ENCODE measurements at regions of chr14 and their contacts with region 1.

Region 1: DNA sequence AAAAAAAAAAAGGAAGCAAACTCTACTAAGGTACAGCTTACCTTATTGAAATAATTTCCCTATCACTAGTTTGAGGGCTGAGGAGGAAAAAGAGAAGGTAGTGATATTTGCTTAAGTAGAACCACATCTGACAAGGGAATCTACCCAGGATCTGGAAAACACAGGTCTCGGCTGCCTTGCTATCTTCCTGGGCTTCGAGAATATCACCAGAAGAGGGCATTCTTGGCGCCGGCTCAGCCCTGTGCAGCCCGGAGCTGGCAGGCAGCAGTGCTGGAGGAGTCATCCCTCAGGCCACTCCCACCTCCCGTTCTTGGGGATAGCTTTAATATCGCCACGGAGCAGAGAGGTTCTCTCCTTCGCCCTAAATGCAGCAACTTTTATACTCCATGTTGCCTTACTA is 1181.2 kb downstream of the VRK1 start:
- DNase-seq: peak; percentile 6
- ATAC-seq: peak; percentile 89
- H3K4me3 ChIP-seq: no peak overlapping the region
- H3K27ac ChIP-seq: no peak overlapping the region
- H3K4me1 ChIP-seq: no peaks in the 10 kb centered on the region
- H3K27me3 ChIP-seq: no peaks in the 10 kb centered on the region
- CTCF ChIP-seq: peak in 1 of 3 experiments; percentile 21; a peak in 1 of 6 replicates
- POLR2A ChIP-seq: no peak
- RAD21 ChIP-seq: peak; percentile 27; the same call in 1 of the 2 replicates

Region 2: GRCh38 chr14:98382662-98383061 is 404.3 kb after region 1 on chr14:
- CTCF ChIA-PET with region 1: no interaction called
- POLR2A ChIA-PET with region 1: no interaction called
- RAD21 ChIA-PET with region 1: no interaction called
- intact Hi-C with region 1: no loop called
- DNase-seq: no peak
- ATAC-seq: no peak
- H3K4me3 ChIP-seq: no peak overlapping the region
- H3K27ac ChIP-seq: no peak overlapping the region
- H3K4me1 ChIP-seq: no peaks in the 10 kb centered on the region
- H3K27me3 ChIP-seq: no peaks in the 10 kb centered on the region
- CTCF ChIP-seq: no peak
- POLR2A ChIP-seq: no peak
- RAD21 ChIP-seq: no peak

Region 3: GRCh38 chr14:99266181-99267178 is 1288.1 kb after region 1 on chr14:
- CTCF ChIA-PET with region 1: no interaction called
- POLR2A ChIA-PET with region 1: no interaction called
- RAD21 ChIA-PET with region 1: no interaction called
- intact Hi-C with region 1: loop called (anchors 1 kb)
- DNase-seq: peak; percentile 45
- ATAC-seq: peak; percentile 96
- H3K4me3 ChIP-seq: no peak overlapping the region; a peak in 1 of 4 replicates
- H3K27ac ChIP-seq: no peak overlapping the region
- H3K4me1 ChIP-seq: peaks cover 4 to 9% of the 10 kb centered on the region in 2 experiments; a peak in 3 of 4 replicates
- H3K27me3 ChIP-seq: peaks cover 2% of the 10 kb centered on the region; the same call in 1 of the 2 replicates
- CTCF ChIP-seq: peak; percentile 73 to 99 (median 97); a peak in 5 of 6 replicates
- POLR2A ChIP-seq: no peak
- RAD21 ChIP-seq: peak; percentile 98

Measured in HCT116 (cell line).